H1 (cell line): ENCODE measurements at regions of chr18 and their contacts with region 1.

Region 1: DNA sequence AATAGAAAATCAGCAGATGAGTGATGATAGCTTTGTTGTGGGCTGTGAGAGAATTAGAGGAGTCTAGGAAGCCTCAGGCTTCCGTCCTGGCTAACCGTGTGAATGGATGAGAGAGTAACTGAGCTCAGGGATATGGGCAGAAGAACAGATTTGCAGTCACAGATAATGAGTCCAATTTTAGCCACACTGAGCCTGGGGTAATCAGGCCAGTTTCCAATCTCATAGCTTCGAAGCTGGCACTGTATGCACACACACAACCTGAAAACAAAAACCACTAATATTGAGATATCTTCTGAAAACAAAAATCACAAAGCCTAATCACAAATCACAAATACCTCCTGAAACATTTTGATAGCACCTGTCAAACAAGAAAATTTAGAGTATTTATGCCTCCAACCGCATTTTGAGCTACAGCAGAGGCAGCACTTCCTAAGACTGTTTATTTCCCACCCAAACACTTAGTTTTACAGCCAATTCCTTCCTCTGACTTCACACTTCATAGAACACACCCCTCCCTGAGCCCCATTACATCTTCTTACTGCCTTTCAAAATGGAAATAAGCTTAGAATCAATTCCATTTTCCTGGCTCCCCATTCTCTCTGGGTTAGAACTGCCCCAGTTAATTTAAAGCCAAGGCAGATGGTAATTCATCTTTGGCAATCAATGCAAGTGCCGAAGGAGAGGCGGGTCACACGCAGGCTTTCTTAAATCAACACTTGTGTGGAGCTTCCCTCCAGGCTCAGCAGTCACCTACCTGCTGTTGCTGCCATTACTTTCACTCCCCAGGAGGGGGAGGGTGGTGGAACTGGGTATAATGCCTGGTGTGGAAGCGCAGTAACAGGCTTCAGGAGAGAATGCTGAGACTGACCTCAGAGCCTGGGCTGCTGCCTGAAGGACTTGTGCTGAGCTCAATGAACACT is 18.9 kb downstream of the TTR start:
- DNase-seq: peak; percentile 57 to 59
- H3K4me3 ChIP-seq: no peak overlapping the region
- H3K27ac ChIP-seq: no peak overlapping the region
- H3K4me1 ChIP-seq: peaks cover 0 to 6% (median 3%) of the 10 kb centered on the region in 4 experiments; a peak in 4 of 7 replicates
- H3K27me3 ChIP-seq: no peaks in the 10 kb centered on the region
- CTCF ChIP-seq: peak; percentile 51 to 62 (median 57)
- EP300 ChIP-seq: no peak
- POLR2A ChIP-seq: no peak
- RAD21 ChIP-seq: peak; percentile 53 to 61

Region 2: GRCh38 chr18:31596081-31596872 is 14.3 kb before region 1 on chr18:
- CTCF ChIA-PET with region 1: interaction called, 21 read pairs
- POLR2A ChIA-PET with region 1: interaction called, 3 read pairs
- DNase-seq: no peak
- H3K4me3 ChIP-seq: no peak overlapping the region
- H3K27ac ChIP-seq: no peak overlapping the region
- H3K4me1 ChIP-seq: no peaks in the 10 kb centered on the region
- H3K27me3 ChIP-seq: no peaks in the 10 kb centered on the region
- CTCF ChIP-seq: no peak
- EP300 ChIP-seq: no peak
- POLR2A ChIP-seq: no peak
- RAD21 ChIP-seq: no peak

Region 3: GRCh38 chr18:31634331-31634713 is 23.8 kb after region 1 on chr18:
- CTCF ChIA-PET with region 1: interaction called, 11 read pairs
- POLR2A ChIA-PET with region 1: no interaction called
- DNase-seq: no peak
- H3K4me3 ChIP-seq: no peak overlapping the region
- H3K27ac ChIP-seq: no peak overlapping the region
- H3K4me1 ChIP-seq: no peaks in the 10 kb centered on the region
- H3K27me3 ChIP-seq: no peaks in the 10 kb centered on the region
- CTCF ChIP-seq: no peak
- EP300 ChIP-seq: no peak
- POLR2A ChIP-seq: no peak
- RAD21 ChIP-seq: no peak

Region 4: GRCh38 chr18:31648966-31649429 is 38.5 kb after region 1 on chr18:
- CTCF ChIA-PET with region 1: interaction called, 16 read pairs
- POLR2A ChIA-PET with region 1: interaction called, 3 read pairs
- DNase-seq: no peak
- H3K4me3 ChIP-seq: no peak overlapping the region
- H3K27ac ChIP-seq: no peak overlapping the region
- H3K4me1 ChIP-seq: peaks cover 0 to 15% (median 3%) of the 10 kb centered on the region in 4 experiments; a peak in 4 of 7 replicates
- H3K27me3 ChIP-seq: no peaks in the 10 kb centered on the region
- CTCF ChIP-seq: no peak
- EP300 ChIP-seq: no peak
- POLR2A ChIP-seq: no peak
- RAD21 ChIP-seq: no peak

Region 5: GRCh38 chr18:31819106-31819924 is 208.8 kb after region 1 on chr18:
- CTCF ChIA-PET with region 1: interaction called, 14 read pairs
- POLR2A ChIA-PET with region 1: no interaction called
- DNase-seq: peak; percentile 15 to 55
- H3K4me3 ChIP-seq: peak overlapping the region in 1 of 4 experiments; percentile 22; a peak in 1 of 8 replicates
- H3K27ac ChIP-seq: no peak overlapping the region
- H3K4me1 ChIP-seq: peaks cover 0 to 15% (median 5%) of the 10 kb centered on the region in 4 experiments; a peak in 4 of 7 replicates
- H3K27me3 ChIP-seq: no peaks in the 10 kb centered on the region
- CTCF ChIP-seq: peak in 2 of 3 experiments; percentile 55 to 76; a peak in 2 of 4 replicates
- EP300 ChIP-seq: no peak
- POLR2A ChIP-seq: peak in 1 of 2 experiments; percentile 16; a peak in 1 of 3 replicates
- RAD21 ChIP-seq: peak; percentile 78 to 82